IMR-90 (cell line): ENCODE measurements at regions of chr1 and their contacts with region 1.

Region 1: GRCh38 chr1:85313888-85314696 is 37.7 kb upstream of the BCL10 start:
- DNase-seq: peak; percentile 96
- ATAC-seq: peak; percentile 78
- H3K4me3 ChIP-seq: no peak overlapping the region
- H3K27ac ChIP-seq: peak overlapping the region; percentile 87
- H3K4me1 ChIP-seq: peaks cover 18% of the 10 kb centered on the region
- H3K27me3 ChIP-seq: no peaks in the 10 kb centered on the region
- CTCF ChIP-seq: no peak
- POLR2A ChIP-seq: no peak
- RAD21 ChIP-seq: no peak

Region 2: GRCh38 chr1:85330711-85331290 is 16.7 kb after region 1 on chr1:
- CTCF ChIA-PET with region 1: interaction called, 4 read pairs
- POLR2A ChIA-PET with region 1: no interaction called
- dilution Hi-C with region 1: no loop called
- in situ Hi-C with region 1: no loop called
- intact Hi-C with region 1: loop called (anchors 1 kb)
- DNase-seq: peak; percentile 99
- ATAC-seq: peak; percentile 62
- H3K4me3 ChIP-seq: no peak overlapping the region
- H3K27ac ChIP-seq: peak overlapping the region; percentile 86
- H3K4me1 ChIP-seq: peaks cover 36% of the 10 kb centered on the region
- H3K27me3 ChIP-seq: no peaks in the 10 kb centered on the region
- CTCF ChIP-seq: no peak
- POLR2A ChIP-seq: peak; percentile 16; the same call in 1 of the 2 replicates
- RAD21 ChIP-seq: no peak

Region 3: GRCh38 chr1:85366391-85367170 is 52.5 kb after region 1 on chr1:
- CTCF ChIA-PET with region 1: no interaction called
- POLR2A ChIA-PET with region 1: no interaction called
- dilution Hi-C with region 1: no loop called
- in situ Hi-C with region 1: no loop called
- intact Hi-C with region 1: loop called (anchors 2 kb)
- DNase-seq: peak; percentile 93
- ATAC-seq: peak; percentile 89
- H3K4me3 ChIP-seq: no peak overlapping the region
- H3K27ac ChIP-seq: peak overlapping the region; percentile 87
- H3K4me1 ChIP-seq: peaks cover 13% of the 10 kb centered on the region
- H3K27me3 ChIP-seq: no peaks in the 10 kb centered on the region
- CTCF ChIP-seq: no peak
- POLR2A ChIP-seq: no peak
- RAD21 ChIP-seq: no peak

Region 4: DNA sequence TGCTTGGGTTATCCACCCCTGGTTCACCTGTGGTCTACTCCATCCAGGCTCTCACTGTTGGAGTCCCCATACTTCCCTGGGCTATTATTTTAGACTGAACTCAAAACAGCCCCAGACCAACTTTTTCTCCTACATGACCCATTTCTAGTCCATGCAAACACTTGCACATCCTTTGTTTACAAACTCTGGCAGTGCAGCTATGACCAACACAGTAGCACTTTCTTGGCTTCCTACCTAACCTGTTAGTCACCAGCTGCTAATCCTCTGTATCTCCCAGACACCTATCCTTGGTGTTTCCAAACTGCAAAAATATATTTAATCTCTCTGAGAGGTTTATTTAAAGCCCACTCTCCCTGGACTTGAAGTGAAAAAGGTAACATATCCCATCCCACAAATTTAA is 60.1 kb after region 1 on chr1:
- CTCF ChIA-PET with region 1: interaction called, 3 read pairs
- POLR2A ChIA-PET with region 1: no interaction called
- dilution Hi-C with region 1: no loop called
- in situ Hi-C with region 1: no loop called
- intact Hi-C with region 1: loop called (anchors 2 kb)
- DNase-seq: peak; percentile 95
- ATAC-seq: peak; percentile 75
- H3K4me3 ChIP-seq: no peak overlapping the region
- H3K27ac ChIP-seq: no peak overlapping the region
- H3K4me1 ChIP-seq: peaks cover 12% of the 10 kb centered on the region
- H3K27me3 ChIP-seq: no peaks in the 10 kb centered on the region
- CTCF ChIP-seq: no peak
- POLR2A ChIP-seq: no peak
- RAD21 ChIP-seq: no peak

Region 5: DNA sequence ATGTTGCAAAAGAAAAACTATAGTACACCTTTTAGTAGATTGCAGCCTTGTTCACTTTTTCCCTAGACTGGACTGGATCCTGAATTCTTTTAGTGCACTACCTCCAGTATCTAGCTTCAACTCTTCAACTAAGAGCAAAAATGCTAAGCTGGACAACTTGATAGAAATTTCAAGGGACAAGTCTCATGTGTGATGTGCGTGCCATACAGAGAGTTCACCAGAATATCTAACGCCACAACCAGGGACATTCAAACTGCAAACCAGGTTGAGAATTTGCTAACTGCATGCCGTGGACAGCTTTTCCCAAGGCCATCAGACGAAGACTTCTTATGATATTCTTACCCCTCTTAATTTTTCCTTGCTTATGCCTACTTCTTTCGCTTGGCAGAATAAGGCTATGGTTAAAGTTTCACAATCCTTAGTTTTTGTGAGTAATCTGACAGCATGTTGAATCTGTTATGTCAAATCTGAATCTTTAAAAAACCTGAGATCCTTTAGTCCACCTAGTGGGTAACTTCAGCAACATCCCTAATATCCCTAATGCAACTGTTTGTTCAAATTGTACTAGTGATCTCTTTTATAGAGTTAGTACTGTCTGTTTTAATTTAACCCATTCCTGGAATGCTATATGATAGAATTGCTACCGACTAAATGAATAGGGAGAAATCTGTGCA is 84.4 kb after region 1 on chr1:
- CTCF ChIA-PET with region 1: no interaction called
- POLR2A ChIA-PET with region 1: interaction called, 5 read pairs
- dilution Hi-C with region 1: no loop called
- in situ Hi-C with region 1: loop called (anchors 5 kb)
- intact Hi-C with region 1: loop called (anchors 2 kb)
- DNase-seq: peak; percentile 71
- ATAC-seq: peak; percentile 32
- H3K4me3 ChIP-seq: no peak overlapping the region
- H3K27ac ChIP-seq: peak overlapping the region; percentile 0; the same call in 1 of the 2 replicates
- H3K4me1 ChIP-seq: peaks cover 9% of the 10 kb centered on the region
- H3K27me3 ChIP-seq: no peaks in the 10 kb centered on the region
- CTCF ChIP-seq: peak; percentile 52
- POLR2A ChIP-seq: no peak
- RAD21 ChIP-seq: peak; percentile 61

Region 6: DNA sequence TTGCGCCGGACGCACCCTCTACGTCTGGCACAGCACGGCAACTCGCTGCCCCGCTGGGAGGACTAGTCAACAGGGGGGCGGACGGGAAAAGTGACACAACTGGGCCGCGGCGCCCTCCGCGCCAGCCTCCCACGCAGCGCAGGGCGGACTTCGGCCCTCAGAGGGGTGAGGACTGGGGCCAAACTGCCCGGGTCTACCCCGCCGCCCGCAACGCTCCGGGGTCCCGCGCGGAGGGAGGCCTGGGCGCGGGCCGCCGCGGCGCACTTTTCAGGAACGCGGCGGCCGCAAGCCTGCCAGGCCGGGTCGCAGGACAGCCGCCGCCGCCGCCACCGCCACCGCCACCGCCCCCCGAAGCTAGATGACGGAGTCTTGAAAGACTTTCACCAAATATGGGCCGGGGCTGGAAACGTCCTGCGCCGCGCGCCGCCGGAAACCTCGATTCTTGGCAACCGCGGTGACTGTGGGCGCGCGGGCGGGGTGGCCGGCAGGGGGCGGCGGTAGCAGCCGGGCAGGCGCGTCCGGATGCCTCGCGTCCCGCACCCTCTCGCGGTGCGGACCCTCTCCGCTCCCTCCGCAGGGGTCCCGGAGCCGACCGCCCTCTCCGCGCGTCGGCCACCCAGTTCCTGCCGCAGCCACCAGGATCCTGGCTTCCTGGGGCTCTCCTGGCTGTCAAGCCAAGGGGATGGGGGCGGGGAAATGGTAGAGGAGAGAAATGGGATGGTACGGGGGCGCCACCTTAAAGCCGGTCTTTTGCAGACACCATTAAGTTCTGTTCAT is 262.7 kb after region 1 on chr1:
- CTCF ChIA-PET with region 1: interaction called, 3 read pairs
- POLR2A ChIA-PET with region 1: interaction called, 3 read pairs
- dilution Hi-C with region 1: no loop called
- in situ Hi-C with region 1: loop called (anchors 5 kb)
- intact Hi-C with region 1: no loop called
- DNase-seq: peak; percentile 88
- ATAC-seq: peak; percentile 27
- H3K4me3 ChIP-seq: peak overlapping the region; percentile 87
- H3K27ac ChIP-seq: peak overlapping the region; percentile 96
- H3K4me1 ChIP-seq: peaks cover 12% of the 10 kb centered on the region
- H3K27me3 ChIP-seq: no peaks in the 10 kb centered on the region
- CTCF ChIP-seq: peak; percentile 64
- POLR2A ChIP-seq: peak; percentile 41; the same call in 1 of the 2 replicates
- RAD21 ChIP-seq: peak; percentile 39; the same call in 1 of the 2 replicates

Region 7: GRCh38 chr1:85700422-85700821 is 386.3 kb after region 1 on chr1:
- CTCF ChIA-PET with region 1: no interaction called
- POLR2A ChIA-PET with region 1: no interaction called
- dilution Hi-C with region 1: no loop called
- in situ Hi-C with region 1: loop called (anchors 5 kb)
- intact Hi-C with region 1: loop called (anchors 5 kb)
- DNase-seq: no peak
- ATAC-seq: no peak
- H3K4me3 ChIP-seq: no peak overlapping the region
- H3K27ac ChIP-seq: no peak overlapping the region
- H3K4me1 ChIP-seq: peaks cover 4% of the 10 kb centered on the region; the same call in 1 of the 2 replicates
- H3K27me3 ChIP-seq: no peaks in the 10 kb centered on the region
- CTCF ChIP-seq: no peak
- POLR2A ChIP-seq: no peak
- RAD21 ChIP-seq: no peak